CD14-positive monocyte (primary cell): ENCODE measurements at regions of chr2 and their contacts with region 1.

Region 1: DNA sequence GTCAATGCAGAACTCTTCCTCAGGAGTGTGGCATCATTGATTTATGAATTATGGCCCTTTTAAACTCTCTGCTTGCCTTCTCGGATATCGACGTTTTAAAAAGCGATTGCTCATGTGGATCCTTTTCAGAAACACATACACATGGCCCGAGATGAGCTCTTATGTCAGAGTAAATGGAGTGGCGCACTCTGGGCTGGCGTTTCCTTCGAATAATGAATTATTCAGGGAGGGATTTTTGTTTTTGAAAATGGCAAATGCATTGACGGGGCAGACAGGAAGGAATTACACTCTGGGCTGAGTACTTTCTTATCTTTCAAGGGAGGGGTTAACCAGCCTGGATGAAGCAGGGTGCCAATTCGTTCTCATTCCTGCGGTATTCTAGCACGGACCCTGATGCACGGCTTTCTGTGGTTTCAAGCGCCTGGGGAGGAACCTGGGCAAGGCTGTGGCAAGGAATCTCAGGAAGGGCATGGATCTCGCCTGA is 142.7 kb downstream of the PRKCE start:
- DNase-seq: no peak
- H3K4me3 ChIP-seq: no peak overlapping the region
- H3K4me3 Mint-ChIP-seq: no peak overlapping the region
- H3K27ac ChIP-seq: no peak overlapping the region
- H3K27ac Mint-ChIP-seq: peak overlapping the region in 1 of 7 donors; percentile 69
- H3K4me1 ChIP-seq: no peaks in the 10 kb centered on the region
- H3K4me1 Mint-ChIP-seq: peaks cover 6% of the 10 kb centered on the region
- H3K27me3 ChIP-seq: no peaks in the 10 kb centered on the region
- H3K27me3 Mint-ChIP-seq: peaks cover 0 to 2% (median 0%) of the 10 kb centered on the region in 3 donors
- CTCF ChIP-seq: no peak

Region 2: GRCh38 chr2:45946023-45946422 is 151.8 kb after region 1 on chr2:
- intact Hi-C with region 1: loop called in 1 of 2 experiments (anchors 5 kb)
- DNase-seq: no peak
- H3K4me3 ChIP-seq: no peak overlapping the region
- H3K4me3 Mint-ChIP-seq: no peak overlapping the region
- H3K27ac ChIP-seq: no peak overlapping the region
- H3K27ac Mint-ChIP-seq: no peak overlapping the region
- H3K4me1 ChIP-seq: no peaks in the 10 kb centered on the region
- H3K4me1 Mint-ChIP-seq: peaks cover 7% of the 10 kb centered on the region
- H3K27me3 ChIP-seq: no peaks in the 10 kb centered on the region
- H3K27me3 Mint-ChIP-seq: peaks cover 0 to 2% (median 0%) of the 10 kb centered on the region in 3 donors
- CTCF ChIP-seq: no peak